Caco-2 (cell line): ENCODE measurements at regions of chr16 and their contacts with region 1.

Region 1: DNA sequence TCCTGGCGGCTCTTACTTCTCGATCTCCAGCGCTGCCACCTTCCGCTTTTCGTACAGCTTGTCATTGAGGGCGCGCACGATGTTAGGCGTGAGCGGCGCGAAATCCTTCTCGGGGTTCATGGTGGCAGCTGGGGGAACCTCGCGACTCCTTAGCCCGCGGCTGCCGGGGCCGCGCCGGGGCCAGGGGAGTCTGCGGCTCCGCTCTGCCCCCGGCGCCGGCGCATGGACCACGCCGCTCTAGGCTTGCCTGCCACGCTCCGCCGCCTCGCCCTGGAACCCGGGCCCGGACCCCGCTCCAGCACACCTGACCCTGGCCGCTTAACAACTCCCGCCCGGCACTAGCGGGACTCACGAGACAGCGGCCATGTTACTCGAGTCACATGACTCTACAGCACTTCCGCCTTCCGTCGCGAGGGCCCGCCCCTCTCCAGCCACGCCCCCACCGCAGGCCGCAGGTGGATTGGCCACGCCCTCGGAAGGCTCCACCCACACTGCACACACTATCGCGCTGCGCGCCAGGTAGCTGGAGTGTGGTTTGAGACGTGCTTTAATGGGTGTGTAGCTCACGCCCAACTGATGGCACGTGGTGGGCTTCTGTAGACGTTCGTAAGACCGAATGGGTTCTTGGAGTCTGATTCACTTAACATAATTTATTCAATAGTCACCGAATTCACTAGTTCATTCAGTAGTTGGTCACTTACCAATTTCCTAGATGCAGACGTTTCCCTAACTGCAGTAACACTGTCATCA is at the start of gene VAC14:
- DNase-seq: peak; percentile 97 to 99
- H3K4me3 ChIP-seq: peak within 1 kb of the TSS; percentile 89
- H3K4me3 Mint-ChIP-seq: peak within 1 kb of the TSS; percentile 91
- H3K27ac Mint-ChIP-seq: peak within 1 kb of the TSS; percentile 96
- H3K4me1 ChIP-seq: peaks cover 5% of the 10 kb centered on the region
- H3K4me1 Mint-ChIP-seq: peaks cover 7% of the 10 kb centered on the region
- H3K27me3 ChIP-seq: no peaks in the 10 kb centered on the region
- H3K27me3 Mint-ChIP-seq: peaks cover 3% of the 10 kb centered on the region
- CTCF ChIP-seq: no peak
- total RNA-seq, gene VAC14: 63.5 and 67.3 TPM in 2 replicates

Region 2: GRCh38 chr16:70324998-70325747 is 475.8 kb before region 1 on chr16:
- CTCF ChIA-PET with region 1: no interaction called
- POLR2A ChIA-PET with region 1: no interaction called
- intact Hi-C with region 1: no loop called
- DNase-seq: no peak
- H3K4me3 ChIP-seq: no peak overlapping the region
- H3K4me3 Mint-ChIP-seq: no peak overlapping the region
- H3K27ac Mint-ChIP-seq: no peak overlapping the region
- H3K4me1 ChIP-seq: no peaks in the 10 kb centered on the region
- H3K4me1 Mint-ChIP-seq: no peaks in the 10 kb centered on the region
- H3K27me3 ChIP-seq: no peaks in the 10 kb centered on the region
- H3K27me3 Mint-ChIP-seq: no peaks in the 10 kb centered on the region
- CTCF ChIP-seq: no peak

Region 3: GRCh38 chr16:70746708-70747424 is 54.1 kb before region 1 on chr16:
- CTCF ChIA-PET with region 1: no interaction called
- POLR2A ChIA-PET with region 1: no interaction called
- intact Hi-C with region 1: loop called (anchors 5 kb)
- DNase-seq: peak; percentile 84 to 92
- H3K4me3 ChIP-seq: no peak overlapping the region
- H3K4me3 Mint-ChIP-seq: peak overlapping the region; percentile 17
- H3K27ac Mint-ChIP-seq: peak overlapping the region; percentile 69
- H3K4me1 ChIP-seq: peaks cover 42% of the 10 kb centered on the region
- H3K4me1 Mint-ChIP-seq: peaks cover 31% of the 10 kb centered on the region
- H3K27me3 ChIP-seq: no peaks in the 10 kb centered on the region
- H3K27me3 Mint-ChIP-seq: no peaks in the 10 kb centered on the region
- CTCF ChIP-seq: no peak

Region 4: DNA sequence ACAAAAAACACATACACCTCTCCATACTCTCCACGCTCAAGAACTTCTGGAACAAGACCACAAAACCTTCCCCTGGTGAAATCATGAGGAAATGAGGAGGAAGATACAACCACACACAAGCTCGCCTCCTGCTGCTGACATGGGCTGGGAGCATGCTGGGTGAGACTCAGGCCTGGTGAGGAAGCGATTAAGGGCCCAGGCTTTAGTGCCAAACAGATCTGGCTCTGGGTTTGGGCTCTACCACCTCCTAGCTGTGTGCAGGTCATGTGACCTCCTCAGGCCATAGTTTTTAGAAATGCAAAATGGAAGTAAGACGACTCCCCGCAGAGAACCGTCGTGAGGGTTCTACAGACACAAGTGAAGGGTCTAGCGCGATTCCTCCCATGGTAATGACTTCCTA is 41.3 kb before region 1 on chr16:
- CTCF ChIA-PET with region 1: no interaction called
- POLR2A ChIA-PET with region 1: no interaction called
- intact Hi-C with region 1: no loop called
- DNase-seq: no peak
- H3K4me3 ChIP-seq: no peak overlapping the region
- H3K4me3 Mint-ChIP-seq: no peak overlapping the region
- H3K27ac Mint-ChIP-seq: no peak overlapping the region
- H3K4me1 ChIP-seq: peaks cover 17% of the 10 kb centered on the region
- H3K4me1 Mint-ChIP-seq: no peaks in the 10 kb centered on the region
- H3K27me3 ChIP-seq: no peaks in the 10 kb centered on the region
- H3K27me3 Mint-ChIP-seq: no peaks in the 10 kb centered on the region
- CTCF ChIP-seq: no peak